Esophagus muscularis mucosa (tissue), 4 donors: ENCODE measurements at regions of chr2 and their contacts with region 1.

Region 1: GRCh38 chr2:201235860-201236811 is 24.2 kb upstream of the CASP8 start:
- DNase-seq: peak; percentile 91
- H3K4me3 ChIP-seq: peak overlapping the region in 2 of 4 donors; percentile 8 to 11
- H3K27ac ChIP-seq: peak overlapping the region in 1 of 4 donors; percentile 4
- H3K4me1 ChIP-seq: peaks cover 14 to 32% (median 26%) of the 10 kb centered on the region in 4 donors
- H3K27me3 ChIP-seq: no peaks in the 10 kb centered on the region
- CTCF ChIP-seq: peak; percentile 64 to 70 (median 65)
- EP300 ChIP-seq: no peak
- POLR2A ChIP-seq: no peak

Region 2: DNA sequence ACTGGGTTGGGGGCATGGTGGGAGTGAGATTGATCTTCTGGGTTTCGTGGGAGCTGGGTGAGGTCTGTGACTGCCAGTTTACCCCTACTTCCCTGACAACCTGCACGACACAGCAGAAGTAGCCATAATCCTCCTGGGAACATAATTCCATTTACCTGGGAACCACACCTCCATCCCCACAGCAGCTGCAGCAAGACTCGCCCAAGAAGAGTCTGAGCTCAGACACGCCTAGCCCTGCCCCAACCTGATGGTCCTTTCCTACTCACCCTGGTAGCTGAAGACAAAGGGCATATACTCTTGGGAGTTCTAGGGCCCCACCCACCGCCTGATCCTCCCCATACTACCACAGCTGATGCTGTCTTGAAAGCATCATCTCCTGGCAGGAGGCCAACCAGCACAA is 77.2 kb after region 1 on chr2:
- intact Hi-C with region 1: no loop called
- DNase-seq: no peak
- H3K4me3 ChIP-seq: no peak overlapping the region
- H3K27ac ChIP-seq: no peak overlapping the region
- H3K4me1 ChIP-seq: no peaks in the 10 kb centered on the region
- H3K27me3 ChIP-seq: no peaks in the 10 kb centered on the region
- CTCF ChIP-seq: no peak
- EP300 ChIP-seq: no peak
- POLR2A ChIP-seq: no peak

Region 3: GRCh38 chr2:201363857-201364560 is 127.9 kb after region 1 on chr2:
- intact Hi-C with region 1: loop called (anchors 5 kb)
- DNase-seq: no peak
- H3K4me3 ChIP-seq: no peak overlapping the region
- H3K27ac ChIP-seq: no peak overlapping the region
- H3K4me1 ChIP-seq: peaks cover 0 to 4% (median 0%) of the 10 kb centered on the region in 4 donors
- H3K27me3 ChIP-seq: no peaks in the 10 kb centered on the region
- CTCF ChIP-seq: peak; percentile 59 to 87 (median 71)
- EP300 ChIP-seq: no peak
- POLR2A ChIP-seq: no peak